ENCODE measurements at regions of chr7 and their contacts with region 1.

Region 1: DNA sequence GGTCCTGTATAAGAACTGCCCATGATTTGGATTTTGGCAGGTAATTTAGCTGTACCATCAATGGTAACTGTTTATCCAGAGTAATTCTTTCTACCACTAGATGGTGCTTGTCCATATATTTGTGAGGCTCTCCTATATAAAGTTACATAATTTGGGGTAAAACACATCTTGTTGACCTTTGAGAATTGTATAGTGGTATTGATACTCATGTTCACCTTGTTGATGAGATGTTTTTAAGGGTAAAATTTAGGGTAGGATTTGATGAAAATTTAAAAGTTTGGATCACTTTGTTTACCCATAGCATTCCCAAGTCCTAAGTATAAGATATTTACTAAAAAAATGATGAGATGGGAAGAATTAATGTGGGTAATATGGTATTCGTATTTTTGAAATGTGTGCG is 31.6 kb downstream of the ST7 start:
- DNase-seq: no peak
- H3K4me3 ChIP-seq: no peak overlapping the region
- H3K27ac ChIP-seq: no peak overlapping the region
- H3K4me1 ChIP-seq: no peaks in the 10 kb centered on the region
- H3K27me3 ChIP-seq: no peaks in the 10 kb centered on the region
- CTCF ChIP-seq: peak; percentile 57 to 70 (median 59)
- EP300 ChIP-seq: no peak
- POLR2A ChIP-seq: no peak

Region 2: DNA sequence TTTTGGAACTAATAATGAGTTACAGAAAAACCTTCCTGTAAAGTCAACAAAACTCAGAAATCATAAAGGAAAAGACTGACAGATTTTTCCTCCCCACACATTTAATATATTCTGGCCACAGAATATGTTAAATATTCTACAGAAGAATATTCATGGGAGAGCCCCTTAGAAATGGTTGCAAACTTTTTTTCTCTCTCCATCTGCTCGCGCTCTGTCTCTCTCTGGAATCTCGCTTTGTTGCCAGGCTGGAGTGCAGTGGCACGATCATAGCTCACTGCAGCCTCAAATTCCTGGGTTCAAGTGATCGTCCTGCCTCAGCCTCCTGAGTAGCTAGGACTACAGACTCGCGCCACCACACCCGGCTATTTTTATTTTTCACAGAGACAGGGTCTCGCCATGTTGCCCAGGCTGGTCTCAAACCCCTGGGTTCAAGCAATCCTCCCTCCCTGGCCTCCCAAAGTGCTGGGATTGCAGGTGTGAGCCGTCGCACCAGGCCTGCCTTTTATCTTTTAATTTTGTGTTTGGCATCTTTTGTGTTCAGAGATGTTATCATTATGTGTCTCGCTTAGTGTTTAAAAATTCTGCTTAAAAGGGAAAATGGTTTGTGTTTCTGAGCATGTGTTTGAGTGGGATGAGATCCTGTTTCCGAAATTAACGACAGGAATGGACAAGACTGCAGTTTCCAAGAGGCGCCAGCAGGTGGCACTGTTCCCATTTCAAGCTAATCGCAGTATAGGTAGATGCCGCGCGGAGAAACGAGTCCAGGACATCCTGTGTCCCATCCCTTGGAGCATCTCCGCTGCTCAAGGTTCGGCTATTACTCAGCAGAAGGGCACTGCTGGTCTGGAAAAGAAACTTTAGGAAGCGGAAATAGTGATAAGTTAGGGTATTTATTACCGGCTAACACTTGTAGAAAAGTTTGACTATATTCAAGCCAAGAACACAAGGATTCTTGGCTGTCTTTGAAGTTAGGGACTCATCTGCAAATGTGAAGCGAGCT is 54.7 kb before region 1 on chr7:
- in situ Hi-C with region 1: no loop called
- intact Hi-C with region 1: loop called (anchors 5 kb)
- DNase-seq: peak; percentile 85
- H3K4me3 ChIP-seq: no peak overlapping the region
- H3K27ac ChIP-seq: no peak overlapping the region
- H3K4me1 ChIP-seq: peaks cover 0 to 6% (median 0%) of the 10 kb centered on the region in 4 donors
- H3K27me3 ChIP-seq: no peaks in the 10 kb centered on the region
- CTCF ChIP-seq: peak; percentile 90 to 96 (median 93)
- EP300 ChIP-seq: no peak
- POLR2A ChIP-seq: no peak

Region 3: DNA sequence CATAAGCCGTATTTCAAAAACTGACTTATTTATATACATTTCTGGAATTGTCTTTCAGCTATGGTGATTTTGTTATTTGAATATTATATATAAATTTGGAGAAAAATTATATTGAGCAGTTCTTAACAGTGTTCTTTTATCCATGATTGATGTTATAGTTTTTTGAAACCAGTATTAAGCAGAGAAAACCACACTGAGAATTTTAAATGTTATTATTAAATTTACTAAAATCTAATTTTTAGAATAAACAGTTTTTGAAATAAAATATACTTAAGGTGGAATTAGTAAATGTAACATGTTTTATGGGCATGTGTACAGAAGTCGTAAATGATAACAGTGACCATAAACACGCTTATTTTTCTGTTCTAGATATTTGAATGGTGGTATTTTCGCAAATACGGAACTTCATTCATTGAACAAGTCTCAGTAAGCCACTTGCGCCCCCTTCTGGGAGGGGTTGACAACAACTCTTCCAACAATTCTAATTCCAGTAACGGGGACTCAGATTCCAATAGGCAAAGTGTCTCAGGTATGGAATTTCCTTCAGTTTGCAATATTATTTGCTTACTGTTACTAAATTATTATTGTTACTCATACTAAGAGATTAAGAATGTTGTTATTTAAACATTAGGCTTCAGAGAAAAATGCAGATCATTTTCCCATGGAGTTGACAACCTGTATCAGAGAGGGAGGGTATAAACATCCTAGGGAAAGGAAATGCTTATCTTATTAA is 134.4 kb after region 1 on chr7:
- in situ Hi-C with region 1: loop called (anchors 5 to 10 kb)
- intact Hi-C with region 1: loop called (anchors 5 kb)
- DNase-seq: peak; percentile 81
- H3K4me3 ChIP-seq: no peak overlapping the region
- H3K27ac ChIP-seq: no peak overlapping the region
- H3K4me1 ChIP-seq: peaks cover under 1 to 17% (median 1%) of the 10 kb centered on the region in 4 donors
- H3K27me3 ChIP-seq: no peaks in the 10 kb centered on the region
- CTCF ChIP-seq: peak; percentile 82 to 90 (median 84)
- EP300 ChIP-seq: no peak
- POLR2A ChIP-seq: no peak

Measured in transverse colon (tissue), 4 donors.